T-cell (primary cell): ENCODE measurements at regions of chr1 and their contacts with region 1.

Region 1: GRCh38 chr1:171313835-171314320 is at the start of gene FMO4:
- DNase-seq: peak; percentile 50 to 96 (median 83)
- ATAC-seq: peak; percentile 100
- H3K4me3 ChIP-seq: no peak within 1 kb of the TSS
- H3K4me3 Mint-ChIP-seq: peak within 1 kb of the TSS; percentile 50 to 75 (median 71)
- H3K27ac ChIP-seq: peak within 1 kb of the TSS; percentile 59
- H3K27ac Mint-ChIP-seq: peak within 1 kb of the TSS; percentile 85 to 89
- H3K4me1 ChIP-seq: peaks cover 3 to 5% of the 10 kb centered on the region in 2 experiments
- H3K4me1 Mint-ChIP-seq: peaks cover 7 to 28% (median 27%) of the 10 kb centered on the region in 3 donors
- H3K27me3 ChIP-seq: no peaks in the 10 kb centered on the region
- H3K27me3 Mint-ChIP-seq: no peaks in the 10 kb centered on the region
- total RNA-seq, gene FMO4: 2.0 to 3.7 (median 2.8) TPM

Region 2: DNA sequence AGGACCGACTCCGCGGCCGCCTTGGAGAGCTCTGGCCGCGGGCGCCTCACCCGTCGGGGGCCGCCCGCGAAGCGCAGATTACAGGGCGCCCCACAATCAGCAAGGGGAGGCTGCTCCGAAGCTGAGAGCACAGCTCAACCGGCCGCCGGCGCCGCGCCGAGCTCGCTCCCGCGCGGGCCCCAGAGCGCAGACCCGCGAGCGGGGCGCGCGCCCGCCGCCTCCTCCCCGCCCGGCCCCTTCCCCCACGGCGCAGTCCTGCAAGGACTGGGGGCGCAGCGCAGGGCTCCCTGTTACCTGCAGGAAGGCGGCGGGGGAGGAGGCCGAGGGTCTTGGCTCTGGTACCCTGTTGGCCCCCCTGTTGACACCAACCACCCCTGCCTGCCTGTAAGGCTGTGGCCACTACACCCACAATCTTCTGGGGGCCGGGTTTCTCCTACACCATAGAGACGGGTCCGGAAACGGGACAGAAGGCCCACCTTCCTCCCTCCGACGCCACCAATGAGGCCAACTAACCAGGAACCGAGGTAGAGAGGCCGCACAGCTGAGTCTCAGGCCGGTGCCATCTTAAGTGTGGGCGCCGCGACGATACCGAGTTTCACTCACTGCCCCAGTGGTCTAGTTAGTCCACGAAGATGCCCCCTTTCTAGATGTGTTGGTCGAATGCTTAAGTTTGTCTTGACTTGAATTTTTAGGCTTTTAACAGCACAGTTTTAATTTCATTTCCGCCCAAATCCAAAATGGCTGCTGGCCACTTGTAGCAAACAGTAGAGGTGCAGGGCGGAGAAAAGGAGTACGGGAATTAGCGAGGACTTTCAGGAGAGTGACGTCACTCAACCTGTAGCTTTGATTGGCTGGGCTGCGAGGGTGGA is 1420.2 kb before region 1 on chr1 and contains the start of gene SCYL3:
- CTCF ChIA-PET with region 1: interaction called in 1 of 2 experiments, 13 read pairs
- POLR2A ChIA-PET with region 1: interaction called in 1 of 2 experiments, 4 read pairs
- DNase-seq: peak; percentile 81 to 95 (median 88)
- ATAC-seq: peak; percentile 88 to 89 (median 88)
- H3K4me3 ChIP-seq: peak within 1 kb of the TSS; percentile 61 to 95
- H3K4me3 Mint-ChIP-seq: peak within 1 kb of the TSS; percentile 87 to 90 (median 89)
- H3K27ac ChIP-seq: peak within 1 kb of the TSS; percentile 98
- H3K27ac Mint-ChIP-seq: peak within 1 kb of the TSS; percentile 99 to 100
- H3K4me1 ChIP-seq: peaks cover 25 to 27% of the 10 kb centered on the region in 2 experiments
- H3K4me1 Mint-ChIP-seq: peaks cover 47 to 50% (median 49%) of the 10 kb centered on the region in 3 donors
- H3K27me3 ChIP-seq: no peaks in the 10 kb centered on the region
- H3K27me3 Mint-ChIP-seq: peaks cover 0 to 10% of the 10 kb centered on the region in 2 donors
- total RNA-seq, gene SCYL3: 10.5 to 20.8 (median 18.2) TPM

Region 3: GRCh38 chr1:170687621-170688020 is 626.3 kb before region 1 on chr1:
- CTCF ChIA-PET with region 1: interaction called, 5 to 22 read pairs
- POLR2A ChIA-PET with region 1: no interaction called
- DNase-seq: no peak
- ATAC-seq: no peak
- H3K4me3 ChIP-seq: no peak overlapping the region
- H3K4me3 Mint-ChIP-seq: no peak overlapping the region
- H3K27ac ChIP-seq: no peak overlapping the region
- H3K27ac Mint-ChIP-seq: no peak overlapping the region
- H3K4me1 ChIP-seq: no peaks in the 10 kb centered on the region
- H3K4me1 Mint-ChIP-seq: no peaks in the 10 kb centered on the region
- H3K27me3 ChIP-seq: peaks cover 2% of the 10 kb centered on the region in 2 experiments
- H3K27me3 Mint-ChIP-seq: peaks cover 21 to 47% of the 10 kb centered on the region in 2 donors

Region 4: GRCh38 chr1:170967042-170967910 is 346.6 kb before region 1 on chr1:
- CTCF ChIA-PET with region 1: interaction called, 6 to 97 read pairs
- POLR2A ChIA-PET with region 1: no interaction called
- DNase-seq: peak in 1 of 35 experiments; percentile 31
- ATAC-seq: no peak
- H3K4me3 ChIP-seq: no peak overlapping the region
- H3K4me3 Mint-ChIP-seq: no peak overlapping the region
- H3K27ac ChIP-seq: no peak overlapping the region
- H3K27ac Mint-ChIP-seq: no peak overlapping the region
- H3K4me1 ChIP-seq: no peaks in the 10 kb centered on the region
- H3K4me1 Mint-ChIP-seq: no peaks in the 10 kb centered on the region
- H3K27me3 ChIP-seq: no peaks in the 10 kb centered on the region
- H3K27me3 Mint-ChIP-seq: peaks cover 19 to 27% of the 10 kb centered on the region in 2 donors

Region 5: DNA sequence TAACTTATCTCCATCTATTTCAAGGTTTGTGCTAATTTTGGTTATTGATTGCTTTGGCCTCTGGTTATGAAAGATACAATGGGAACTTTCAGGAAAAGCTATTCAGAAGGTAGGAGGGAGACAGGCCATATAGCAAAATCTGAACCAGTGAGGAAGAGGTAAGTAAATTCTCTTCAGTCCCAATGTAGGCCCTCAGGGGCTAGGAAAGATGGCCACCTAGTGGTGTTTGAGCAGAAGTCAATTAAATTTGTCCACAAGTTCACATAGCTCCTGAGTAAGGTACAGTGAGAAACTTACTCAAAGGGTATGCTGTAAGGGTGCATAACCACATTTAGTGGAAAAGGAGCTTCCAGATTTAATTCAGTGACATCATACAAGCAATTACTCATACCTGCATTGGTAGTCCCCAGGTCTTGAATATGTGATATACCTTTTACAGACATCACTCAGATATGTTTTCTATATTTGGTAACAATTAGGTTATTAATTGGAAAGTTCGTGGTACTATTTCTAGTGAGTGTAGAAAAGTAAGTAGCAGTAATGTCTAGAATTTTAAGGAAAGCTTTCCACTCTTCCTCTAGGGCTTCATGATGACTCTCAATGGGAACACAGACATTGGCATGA is 87.0 kb before region 1 on chr1:
- CTCF ChIA-PET with region 1: interaction called in 1 of 2 experiments, 11 read pairs
- POLR2A ChIA-PET with region 1: no interaction called
- DNase-seq: peak in 3 of 35 experiments; percentile 2 to 29 (median 2)
- ATAC-seq: no peak
- H3K4me3 ChIP-seq: no peak overlapping the region
- H3K4me3 Mint-ChIP-seq: no peak overlapping the region
- H3K27ac ChIP-seq: no peak overlapping the region
- H3K27ac Mint-ChIP-seq: no peak overlapping the region
- H3K4me1 ChIP-seq: no peaks in the 10 kb centered on the region
- H3K4me1 Mint-ChIP-seq: no peaks in the 10 kb centered on the region
- H3K27me3 ChIP-seq: no peaks in the 10 kb centered on the region
- H3K27me3 Mint-ChIP-seq: peaks cover 0 to 3% of the 10 kb centered on the region in 2 donors

Region 6: DNA sequence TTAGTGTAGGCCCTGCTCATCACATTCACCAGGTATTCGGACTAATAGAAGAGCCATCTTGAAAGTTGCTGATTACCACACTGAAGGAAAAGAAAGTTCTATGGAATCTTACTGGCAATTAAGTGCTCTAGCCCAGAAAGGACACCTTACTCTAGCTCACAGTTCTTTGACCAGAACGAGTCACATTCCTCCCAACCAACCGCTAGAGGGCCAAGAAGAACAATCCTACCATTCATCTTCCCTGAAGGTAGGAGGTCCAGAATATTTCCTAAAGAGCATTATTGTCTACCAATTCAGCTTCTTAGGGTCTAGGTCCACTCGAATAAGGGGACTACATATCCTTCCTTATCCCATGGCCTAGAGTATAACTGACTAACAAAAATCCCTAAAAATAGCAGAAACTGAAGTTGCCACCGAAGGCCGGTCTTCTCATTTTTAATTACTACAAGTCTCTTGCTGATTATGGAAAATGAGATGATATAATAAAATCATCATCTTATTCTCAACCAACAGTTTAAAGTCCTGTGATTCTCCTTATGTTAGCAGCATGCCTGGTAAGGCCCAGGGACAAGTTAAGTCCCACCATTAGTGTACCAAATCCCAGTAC is 68.3 kb before region 1 on chr1:
- CTCF ChIA-PET with region 1: interaction called, 22 to 83 read pairs
- POLR2A ChIA-PET with region 1: no interaction called
- DNase-seq: peak in 5 of 35 experiments; percentile 3 to 51 (median 10)
- ATAC-seq: peak in 1 of 4 experiments; percentile 43
- H3K4me3 ChIP-seq: no peak overlapping the region
- H3K4me3 Mint-ChIP-seq: no peak overlapping the region
- H3K27ac ChIP-seq: no peak overlapping the region
- H3K27ac Mint-ChIP-seq: no peak overlapping the region
- H3K4me1 ChIP-seq: no peaks in the 10 kb centered on the region
- H3K4me1 Mint-ChIP-seq: no peaks in the 10 kb centered on the region
- H3K27me3 ChIP-seq: peaks cover 0 to 7% of the 10 kb centered on the region in 2 experiments
- H3K27me3 Mint-ChIP-seq: peaks cover 14 to 32% of the 10 kb centered on the region in 2 donors

Region 7: DNA sequence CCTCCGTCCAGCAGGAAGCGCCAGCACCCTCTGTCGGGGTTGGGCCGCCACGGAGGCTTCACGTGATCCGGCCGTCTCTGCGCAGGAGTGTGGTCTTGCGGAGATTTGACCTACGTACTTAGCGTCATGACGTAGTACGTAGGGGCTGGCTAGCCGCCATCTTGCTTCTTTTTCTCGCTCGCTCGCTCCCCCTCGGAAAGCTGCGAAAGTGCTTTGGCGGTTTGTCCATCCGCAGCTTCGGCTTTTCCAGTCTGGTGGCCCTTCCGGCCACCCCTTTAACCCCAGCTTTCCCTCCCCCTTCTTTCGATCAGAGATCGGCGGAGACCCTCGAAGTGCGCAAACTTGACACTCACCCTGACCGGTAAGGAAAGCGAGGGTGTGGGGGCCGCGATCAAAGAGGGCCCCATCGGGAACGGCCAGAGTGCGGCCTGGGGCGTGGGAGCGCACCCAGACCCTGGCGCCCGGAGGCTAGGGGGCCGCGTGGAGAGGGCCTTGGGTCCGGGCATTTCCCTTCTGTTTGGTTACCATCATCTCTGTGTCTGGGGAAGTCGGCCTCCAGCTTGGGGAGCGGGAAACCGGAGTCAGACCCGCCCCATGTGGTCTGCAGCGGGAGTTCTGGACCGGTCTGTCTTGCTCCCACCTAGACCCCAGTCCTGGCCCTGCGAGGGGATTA is 171.6 kb after region 1 on chr1 and contains the start of gene PRRC2C:
- CTCF ChIA-PET with region 1: interaction called, 4 to 10 read pairs
- POLR2A ChIA-PET with region 1: interaction called in 1 of 2 experiments, 13 read pairs
- DNase-seq: peak; percentile 81 to 99 (median 93)
- ATAC-seq: peak; percentile 86 to 95 (median 94)
- H3K4me3 ChIP-seq: peak within 1 kb of the TSS; percentile 68 to 100
- H3K4me3 Mint-ChIP-seq: peak within 1 kb of the TSS; percentile 97 to 99 (median 99)
- H3K27ac ChIP-seq: peak within 1 kb of the TSS; percentile 97
- H3K27ac Mint-ChIP-seq: peak within 1 kb of the TSS; percentile 88 to 94
- H3K4me1 ChIP-seq: peaks cover 26 to 40% of the 10 kb centered on the region in 2 experiments
- H3K4me1 Mint-ChIP-seq: peaks cover 50 to 55% (median 55%) of the 10 kb centered on the region in 3 donors
- H3K27me3 ChIP-seq: no peaks in the 10 kb centered on the region
- H3K27me3 Mint-ChIP-seq: no peaks in the 10 kb centered on the region
- total RNA-seq, gene PRRC2C: 229 to 340 (median 259) TPM